Mammary epithelial cell (primary cell): ENCODE measurements at regions of chr1 and their contacts with region 1.

Region 1: GRCh38 chr1:65119951-65120350 is 28.1 kb upstream of the AK4 start:
- DNase-seq: no peak
- H3K4me3 ChIP-seq: no peak overlapping the region
- H3K27ac ChIP-seq: no peak overlapping the region
- H3K4me1 ChIP-seq: no peaks in the 10 kb centered on the region
- H3K27me3 ChIP-seq: no peaks in the 10 kb centered on the region
- CTCF ChIP-seq: no peak

Region 2: GRCh38 chr1:64948905-64949833 is 170.8 kb before region 1 on chr1:
- CTCF ChIA-PET with region 1: no interaction called
- dilution Hi-C with region 1: no loop called
- in situ Hi-C with region 1: no loop called
- intact Hi-C with region 1: no loop called
- DNase-seq: peak; percentile 71
- H3K4me3 ChIP-seq: no peak overlapping the region
- H3K27ac ChIP-seq: peak overlapping the region; percentile 81
- H3K4me1 ChIP-seq: peaks cover 15% of the 10 kb centered on the region
- H3K27me3 ChIP-seq: no peaks in the 10 kb centered on the region
- CTCF ChIP-seq: no peak

Region 3: DNA sequence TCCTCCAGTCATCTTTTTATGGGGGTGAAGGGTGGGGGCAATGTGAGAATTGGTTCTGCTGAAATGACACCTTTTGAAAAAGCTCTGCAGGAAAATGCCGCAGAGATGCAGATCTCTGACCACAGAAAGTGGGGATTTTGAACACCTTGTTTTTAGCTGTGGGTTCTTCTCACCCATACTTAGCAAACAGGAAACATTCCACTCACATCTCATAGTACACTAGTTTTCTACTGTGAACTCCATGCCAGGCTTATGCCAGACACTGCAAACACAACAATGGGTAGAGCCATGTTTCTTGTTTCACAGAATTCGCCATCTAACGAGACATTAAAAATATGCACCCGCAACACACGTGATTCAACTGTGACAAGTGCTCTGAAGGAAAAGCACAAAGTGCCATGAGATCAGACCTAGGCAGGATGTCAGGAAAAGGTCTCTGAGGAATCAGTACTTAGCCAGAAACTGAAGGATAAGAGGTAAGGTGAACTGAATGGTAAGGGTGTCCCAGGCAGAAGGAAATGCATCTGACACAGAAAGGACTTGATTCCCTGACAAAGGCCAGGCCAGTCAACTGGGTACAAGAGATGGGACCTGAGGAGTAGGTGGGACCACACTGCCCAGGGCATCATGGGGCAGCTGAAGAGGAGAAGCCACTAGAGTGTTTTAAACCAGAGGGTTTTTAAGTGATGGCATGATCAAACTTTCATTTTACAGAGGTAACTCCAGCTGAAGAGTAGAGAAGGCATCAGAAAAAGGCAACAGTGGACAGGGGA is 69.8 kb before region 1 on chr1:
- CTCF ChIA-PET with region 1: no interaction called
- dilution Hi-C with region 1: loop called (anchors 5 kb)
- in situ Hi-C with region 1: no loop called
- intact Hi-C with region 1: no loop called
- DNase-seq: no peak
- H3K4me3 ChIP-seq: no peak overlapping the region
- H3K27ac ChIP-seq: no peak overlapping the region
- H3K4me1 ChIP-seq: no peaks in the 10 kb centered on the region
- H3K27me3 ChIP-seq: no peaks in the 10 kb centered on the region
- CTCF ChIP-seq: no peak